Left cardiac atrium (tissue), 4 donors: ENCODE measurements at regions of chrX and their contacts with region 1.

Region 1: DNA sequence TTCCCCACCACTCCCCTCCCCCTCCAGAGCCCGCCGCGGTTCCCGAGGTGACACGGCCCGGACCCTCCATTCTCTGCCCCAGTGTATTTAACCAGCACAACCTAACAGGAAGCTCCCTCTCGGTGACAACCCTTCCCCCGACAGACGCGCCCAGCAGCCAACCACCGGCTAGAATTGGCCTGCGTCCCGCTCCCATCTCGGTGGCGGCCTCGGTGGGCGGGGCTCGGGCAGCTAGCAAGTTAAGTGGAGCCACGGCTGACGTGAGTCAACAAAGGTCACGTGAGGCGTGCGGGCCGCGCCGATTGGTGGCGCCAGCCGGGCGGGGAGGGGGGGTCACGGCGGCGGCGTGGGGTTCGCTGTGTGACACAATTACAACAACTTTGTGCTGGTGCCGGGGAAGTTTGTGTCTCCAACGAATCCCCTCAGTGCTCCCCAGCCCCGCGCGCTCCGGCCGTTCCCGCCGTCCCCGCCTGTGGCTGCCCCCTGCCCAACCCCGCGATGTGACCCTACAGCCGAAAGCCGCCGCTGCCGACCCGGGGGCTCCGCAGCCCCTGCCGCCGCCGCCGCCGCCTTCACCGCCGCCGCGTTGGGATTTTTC is at the start of gene KDM6A:
- DNase-seq: peak; percentile 100
- ATAC-seq: peak; percentile 94 to 95
- total RNA-seq, gene KDM6A: 8.8 to 15.3 TPM

Region 2: DNA sequence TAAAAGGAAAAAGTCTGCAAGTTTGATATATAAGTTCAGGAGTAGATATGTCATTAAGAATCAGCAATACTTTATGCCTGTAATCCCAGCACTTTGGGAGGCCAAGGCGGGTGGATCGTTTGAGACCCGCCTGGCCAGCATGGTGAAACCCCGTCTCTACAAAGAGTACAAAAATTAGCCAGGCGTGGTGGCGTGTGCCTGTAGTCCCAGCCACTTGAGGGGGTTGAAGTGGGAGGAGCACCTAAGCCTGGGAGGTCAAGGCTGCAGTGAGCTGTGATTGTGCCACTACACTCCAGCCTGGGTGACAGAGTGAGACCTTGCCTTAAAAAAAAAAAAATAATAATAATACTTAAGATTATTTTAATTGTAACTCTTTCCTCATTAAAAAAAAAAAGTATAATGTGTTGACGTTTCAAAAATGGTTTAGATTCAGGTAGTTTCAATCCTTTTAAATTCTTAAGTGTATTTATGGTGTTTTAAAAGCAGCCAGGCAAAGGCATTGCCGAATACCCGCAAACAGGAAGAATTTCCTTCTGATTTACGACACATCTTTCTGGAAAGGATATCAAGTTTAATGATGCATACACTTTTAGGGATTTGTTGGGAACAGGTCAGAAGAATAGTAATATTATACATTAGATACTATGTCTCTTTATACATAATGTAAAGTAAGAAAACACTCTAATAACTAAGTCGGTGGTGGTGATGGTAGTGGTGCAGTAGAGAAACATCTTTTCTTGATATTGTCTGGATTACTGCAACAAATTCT is 81.0 kb after region 1 on chrX:
- intact Hi-C with region 1: loop called in 1 of 2 experiments (anchors 10 kb)
- DNase-seq: no peak
- ATAC-seq: no peak

Region 3: GRCh38 chrX:45070116-45071007 is 197.4 kb after region 1 on chrX:
- intact Hi-C with region 1: loop called in 1 of 2 experiments (anchors 5 kb)
- DNase-seq: no peak
- ATAC-seq: peak; percentile 35 to 44